Gastrocnemius medialis (tissue), 4 donors: ENCODE measurements at regions of chr12 and their contacts with region 1.

Region 1: DNA sequence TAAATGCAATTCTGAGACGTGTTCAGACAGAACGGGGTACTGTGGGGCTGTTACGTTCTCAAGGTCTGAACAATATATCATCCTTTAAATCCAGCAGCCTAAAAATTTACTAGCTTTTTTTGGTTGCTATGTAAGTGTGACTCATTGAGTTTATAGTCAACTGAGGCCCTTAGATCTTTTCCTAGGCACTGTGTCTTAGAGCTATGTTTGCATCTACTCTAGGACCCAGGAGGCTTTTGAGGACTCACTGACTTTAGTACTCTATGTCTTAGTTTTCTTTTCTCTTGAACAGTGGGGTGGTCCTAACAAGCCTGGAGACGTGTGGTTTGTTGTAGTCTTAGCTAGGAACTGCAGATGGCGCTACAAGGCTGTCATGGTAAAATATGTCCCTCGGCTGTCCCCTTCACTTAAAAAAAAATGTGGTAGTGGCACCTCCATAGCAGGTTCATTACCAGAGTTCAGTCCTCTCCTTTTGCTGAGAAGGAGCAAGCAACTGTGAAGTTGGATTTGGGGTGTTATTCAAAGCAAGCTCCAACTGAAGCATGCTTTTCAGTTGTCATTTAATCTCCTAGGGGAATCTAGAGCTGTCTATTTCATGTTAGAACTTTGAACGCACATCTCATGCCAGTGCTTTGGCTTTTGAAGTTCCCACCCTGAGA is 8.7 kb upstream of the SPATS2 start:
- DNase-seq: peak in 1 of 2 donors; percentile 53
- ATAC-seq: peak; percentile 79 to 94
- H3K4me3 ChIP-seq: no peak overlapping the region
- H3K27ac ChIP-seq: no peak overlapping the region
- H3K4me1 ChIP-seq: peaks cover 0 to 7% of the 10 kb centered on the region in 2 donors
- H3K27me3 ChIP-seq: no peaks in the 10 kb centered on the region
- CTCF ChIP-seq: peak; percentile 82 to 92 (median 84)
- POLR2A ChIP-seq: no peak

Region 2: DNA sequence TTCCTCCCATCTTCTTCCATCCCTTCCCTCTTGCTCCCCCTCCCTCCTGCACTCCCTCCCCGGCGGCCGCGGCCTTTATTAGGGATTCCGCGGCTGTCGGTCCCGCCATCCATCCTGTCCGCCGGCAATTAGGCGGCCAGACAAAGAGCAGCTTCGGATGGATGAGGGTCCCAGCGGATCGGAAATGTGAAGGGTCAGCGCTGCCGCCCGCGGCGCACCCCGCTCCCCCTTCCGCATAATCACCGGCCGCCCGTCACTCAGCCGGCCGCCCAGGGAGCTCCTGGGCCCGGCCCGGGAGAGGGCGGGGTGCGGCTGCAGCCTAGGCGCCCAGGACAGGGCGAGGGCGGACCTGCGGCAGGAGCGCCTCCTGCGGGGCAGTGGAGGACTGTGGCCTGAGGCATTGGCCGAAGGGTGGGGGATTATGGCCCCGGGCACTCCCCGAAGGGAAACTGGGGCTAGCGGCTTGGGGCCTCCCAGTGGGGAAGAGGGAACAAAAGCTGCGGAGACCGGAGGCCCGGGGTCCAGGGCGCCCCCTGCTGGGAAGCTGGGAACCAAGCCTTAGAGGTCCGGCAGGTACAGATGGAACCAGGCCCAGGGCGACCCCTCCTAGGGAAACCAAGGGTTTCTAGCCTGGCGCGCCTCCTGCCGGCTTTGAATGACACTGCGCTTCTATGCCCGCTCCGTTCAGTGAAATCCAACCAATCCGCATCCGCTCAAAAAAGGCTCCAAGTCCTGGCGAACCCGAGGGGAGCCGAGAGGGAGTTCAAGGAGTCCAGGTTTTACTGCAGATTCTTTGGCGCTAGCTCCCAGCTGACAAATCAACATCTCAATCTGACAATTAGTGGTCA is 16.3 kb before region 1 on chr12:
- in situ Hi-C with region 1: no loop called
- intact Hi-C with region 1: no loop called
- DNase-seq: peak in 1 of 2 donors; percentile 19
- ATAC-seq: peak; percentile 43 to 63
- H3K4me3 ChIP-seq: peak overlapping the region; percentile 40 to 60 (median 50)
- H3K27ac ChIP-seq: no peak overlapping the region
- H3K4me1 ChIP-seq: peaks cover 27 to 41% of the 10 kb centered on the region in 2 donors
- H3K27me3 ChIP-seq: peaks cover 55 to 79% (median 58%) of the 10 kb centered on the region in 3 donors
- CTCF ChIP-seq: peak; percentile 60 to 81 (median 66)
- POLR2A ChIP-seq: no peak

Region 3: DNA sequence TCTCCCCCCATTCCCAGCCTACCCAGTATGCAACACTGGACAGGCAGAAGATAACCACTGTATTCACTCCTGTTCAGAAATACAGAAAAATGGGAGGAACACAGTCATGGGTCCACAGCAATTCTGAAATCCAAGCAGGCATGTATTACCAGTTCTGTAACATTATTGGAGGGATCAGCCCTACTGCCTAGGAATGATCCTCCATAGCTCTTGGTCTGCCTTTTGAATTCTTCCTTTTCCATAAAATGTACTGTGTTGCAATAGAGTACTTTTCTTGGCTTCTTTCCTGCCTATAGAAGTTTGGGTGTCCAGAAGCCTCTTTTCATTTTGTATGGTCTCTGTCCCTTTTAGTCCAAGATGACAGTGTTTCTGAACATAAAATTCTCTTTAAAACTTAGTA is 55.2 kb after region 1 on chr12:
- in situ Hi-C with region 1: no loop called
- intact Hi-C with region 1: no loop called
- DNase-seq: no peak
- ATAC-seq: no peak
- H3K4me3 ChIP-seq: no peak overlapping the region
- H3K27ac ChIP-seq: no peak overlapping the region
- H3K4me1 ChIP-seq: peaks cover 0 to 13% of the 10 kb centered on the region in 2 donors
- H3K27me3 ChIP-seq: no peaks in the 10 kb centered on the region
- CTCF ChIP-seq: no peak
- POLR2A ChIP-seq: no peak

Region 4: DNA sequence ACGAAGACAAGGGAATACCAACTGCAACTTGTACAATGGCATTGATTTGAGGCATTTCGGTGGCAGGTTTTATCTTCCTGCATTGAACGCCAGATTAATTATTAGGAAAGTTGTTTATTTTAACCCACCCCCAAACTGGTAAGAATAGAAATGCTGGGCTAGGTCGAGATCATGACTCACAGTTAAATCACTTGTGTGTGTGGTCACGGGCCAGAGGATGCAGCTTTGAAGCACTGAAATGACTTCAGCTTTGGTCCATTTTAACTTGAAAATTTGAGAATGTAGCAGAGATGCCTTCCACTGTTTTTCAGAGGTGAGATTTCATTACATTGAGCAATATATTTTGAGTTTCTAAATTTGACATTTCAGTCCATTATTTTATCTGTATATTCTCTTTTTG is 156.7 kb after region 1 on chr12:
- in situ Hi-C with region 1: loop called (anchors 5 to 10 kb)
- intact Hi-C with region 1: loop called (anchors 1 kb)
- DNase-seq: no peak
- ATAC-seq: no peak
- H3K4me3 ChIP-seq: no peak overlapping the region
- H3K27ac ChIP-seq: no peak overlapping the region
- H3K4me1 ChIP-seq: no peaks in the 10 kb centered on the region
- H3K27me3 ChIP-seq: no peaks in the 10 kb centered on the region
- CTCF ChIP-seq: no peak
- POLR2A ChIP-seq: no peak

Region 5: GRCh38 chr12:49580572-49581535 is 222.2 kb after region 1 on chr12:
- in situ Hi-C with region 1: no loop called
- intact Hi-C with region 1: loop called (anchors 1 kb)
- DNase-seq: peak; percentile 47 to 74
- ATAC-seq: peak; percentile 84 to 95
- H3K4me3 ChIP-seq: no peak overlapping the region
- H3K27ac ChIP-seq: peak overlapping the region in 3 of 4 donors; percentile 12 to 23 (median 20)
- H3K4me1 ChIP-seq: peaks cover 5 to 19% of the 10 kb centered on the region in 2 donors
- H3K27me3 ChIP-seq: no peaks in the 10 kb centered on the region
- CTCF ChIP-seq: peak; percentile 71 to 87 (median 72)
- POLR2A ChIP-seq: no peak